Esophagus muscularis mucosa (tissue), 4 donors: ENCODE measurements at regions of chr5 and their contacts with region 1.

Region 1: GRCh38 chr5:149442563-149443182 is 63.6 kb upstream of the IL17B start:
- DNase-seq: no peak
- H3K4me3 ChIP-seq: no peak overlapping the region
- H3K27ac ChIP-seq: peak overlapping the region; percentile 86 to 89 (median 88)
- H3K4me1 ChIP-seq: peaks cover 26 to 68% (median 52%) of the 10 kb centered on the region in 4 donors
- H3K27me3 ChIP-seq: no peaks in the 10 kb centered on the region
- CTCF ChIP-seq: peak; percentile 89 to 97 (median 92)
- EP300 ChIP-seq: no peak
- POLR2A ChIP-seq: no peak

Region 2: DNA sequence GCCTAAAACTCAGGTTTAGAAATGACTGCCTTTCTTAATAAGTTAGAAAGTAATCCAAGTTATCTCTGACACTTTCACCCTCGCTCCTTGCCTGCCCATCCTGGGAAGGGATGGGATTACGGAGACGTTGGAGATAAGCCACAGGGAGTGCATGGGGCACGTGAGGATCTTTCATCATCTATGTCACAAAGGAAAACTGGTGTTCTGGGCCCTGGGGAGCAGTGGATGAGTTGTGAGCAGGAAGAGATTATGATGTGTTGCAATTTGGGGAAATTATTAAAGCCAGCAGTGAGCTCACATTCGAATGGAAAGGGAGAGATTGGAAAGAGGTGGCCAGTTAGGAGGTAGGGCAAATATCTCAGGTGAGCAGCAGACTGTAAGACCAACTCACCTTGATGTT is 158.2 kb before region 1 on chr5:
- intact Hi-C with region 1: no loop called
- DNase-seq: peak; percentile 93
- H3K4me3 ChIP-seq: no peak overlapping the region
- H3K27ac ChIP-seq: peak overlapping the region; percentile 24 to 56 (median 41)
- H3K4me1 ChIP-seq: peaks cover 29 to 77% (median 34%) of the 10 kb centered on the region in 4 donors
- H3K27me3 ChIP-seq: no peaks in the 10 kb centered on the region
- CTCF ChIP-seq: no peak
- EP300 ChIP-seq: no peak
- POLR2A ChIP-seq: no peak

Region 3: GRCh38 chr5:149561848-149562247 is 119.2 kb after region 1 on chr5:
- intact Hi-C with region 1: loop called (anchors 2 kb)
- DNase-seq: no peak
- H3K4me3 ChIP-seq: peak overlapping the region in 1 of 4 donors; percentile 15
- H3K27ac ChIP-seq: peak overlapping the region; percentile 78 to 87 (median 84)
- H3K4me1 ChIP-seq: peaks cover 35 to 47% (median 41%) of the 10 kb centered on the region in 4 donors
- H3K27me3 ChIP-seq: no peaks in the 10 kb centered on the region
- CTCF ChIP-seq: peak in 1 of 3 experiments; percentile 9
- EP300 ChIP-seq: no peak
- POLR2A ChIP-seq: no peak

Region 4: DNA sequence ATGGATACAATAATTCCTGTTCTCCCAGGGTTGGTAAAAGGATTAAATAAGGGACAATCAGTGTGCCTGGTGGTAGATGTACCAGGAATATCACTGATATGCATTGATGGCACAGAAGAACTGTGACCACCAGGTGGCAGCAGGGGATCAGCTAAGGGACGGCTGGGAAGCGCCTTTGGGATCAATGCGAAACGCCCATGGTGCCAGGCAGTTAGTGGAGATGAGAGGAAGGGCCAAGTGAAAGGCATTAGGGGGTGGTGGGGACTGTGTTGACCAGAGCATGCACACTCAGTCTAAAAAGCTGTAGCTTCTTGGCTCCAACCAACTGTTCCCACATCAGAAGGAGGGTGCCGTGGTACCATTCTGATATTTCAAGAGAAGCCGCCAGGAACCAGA is 194.2 kb after region 1 on chr5:
- intact Hi-C with region 1: no loop called
- DNase-seq: no peak
- H3K4me3 ChIP-seq: no peak overlapping the region
- H3K27ac ChIP-seq: no peak overlapping the region
- H3K4me1 ChIP-seq: peaks cover 0 to 22% (median 13%) of the 10 kb centered on the region in 4 donors
- H3K27me3 ChIP-seq: no peaks in the 10 kb centered on the region
- CTCF ChIP-seq: peak; percentile 68 to 89 (median 72)
- EP300 ChIP-seq: no peak
- POLR2A ChIP-seq: no peak

Region 5: GRCh38 chr5:149775785-149776184 is 333.1 kb after region 1 on chr5:
- intact Hi-C with region 1: no loop called
- DNase-seq: no peak
- H3K4me3 ChIP-seq: no peak overlapping the region
- H3K27ac ChIP-seq: peak overlapping the region; percentile 61 to 91 (median 85)
- H3K4me1 ChIP-seq: peaks cover 88 to 97% (median 94%) of the 10 kb centered on the region in 4 donors
- H3K27me3 ChIP-seq: no peaks in the 10 kb centered on the region
- CTCF ChIP-seq: peak in 2 of 3 experiments; percentile 21 to 27
- EP300 ChIP-seq: no peak
- POLR2A ChIP-seq: no peak